Calu3 (cell line): ENCODE measurements at regions of chr3 and their contacts with region 1.

Region 1: DNA sequence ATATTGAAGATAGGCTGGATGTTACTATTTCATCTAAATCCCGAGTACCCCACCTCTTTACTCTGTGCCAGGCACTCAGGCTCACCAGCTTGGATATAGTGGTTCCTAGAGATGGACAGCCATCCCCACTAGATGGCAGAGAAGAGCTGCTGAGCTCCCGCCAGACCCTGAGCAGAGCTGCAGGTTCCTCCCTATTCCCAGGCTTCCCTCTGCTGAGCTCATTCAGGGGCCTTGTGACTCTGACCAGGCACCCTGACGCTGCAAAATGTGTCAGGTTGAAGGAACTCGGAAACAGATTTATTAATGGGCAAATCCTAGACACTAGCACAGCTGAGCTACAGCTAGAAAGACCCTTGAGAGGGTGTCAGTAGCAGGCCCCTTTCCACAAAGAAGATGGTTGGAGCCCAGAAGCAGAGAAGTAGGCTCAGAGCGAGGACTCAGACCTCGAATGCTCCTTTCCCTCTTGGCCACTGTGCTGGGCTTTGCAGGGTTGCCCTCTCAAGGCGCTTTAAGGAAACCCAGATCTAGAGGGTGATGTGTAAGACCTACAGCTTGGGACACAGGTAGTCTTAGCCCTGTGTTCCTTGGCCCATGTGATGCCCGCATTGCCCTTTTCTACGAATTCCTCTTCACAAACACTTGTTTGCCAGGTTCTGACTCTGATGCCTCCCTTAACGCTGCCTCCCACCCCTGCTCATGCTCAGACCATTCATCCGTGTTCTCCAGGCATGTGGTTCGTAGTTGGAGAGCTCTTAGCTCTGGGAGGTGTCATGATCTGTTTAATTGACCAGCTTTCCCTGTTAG is 38.0 kb upstream of the RHO start:
- DNase-seq: peak; percentile 91
- H3K4me3 Mint-ChIP-seq: no peak overlapping the region
- H3K27ac Mint-ChIP-seq: peak overlapping the region; percentile 37
- H3K4me1 Mint-ChIP-seq: peaks cover 14% of the 10 kb centered on the region
- H3K27me3 Mint-ChIP-seq: no peaks in the 10 kb centered on the region
- CTCF ChIP-seq: peak; percentile 93

Region 2: DNA sequence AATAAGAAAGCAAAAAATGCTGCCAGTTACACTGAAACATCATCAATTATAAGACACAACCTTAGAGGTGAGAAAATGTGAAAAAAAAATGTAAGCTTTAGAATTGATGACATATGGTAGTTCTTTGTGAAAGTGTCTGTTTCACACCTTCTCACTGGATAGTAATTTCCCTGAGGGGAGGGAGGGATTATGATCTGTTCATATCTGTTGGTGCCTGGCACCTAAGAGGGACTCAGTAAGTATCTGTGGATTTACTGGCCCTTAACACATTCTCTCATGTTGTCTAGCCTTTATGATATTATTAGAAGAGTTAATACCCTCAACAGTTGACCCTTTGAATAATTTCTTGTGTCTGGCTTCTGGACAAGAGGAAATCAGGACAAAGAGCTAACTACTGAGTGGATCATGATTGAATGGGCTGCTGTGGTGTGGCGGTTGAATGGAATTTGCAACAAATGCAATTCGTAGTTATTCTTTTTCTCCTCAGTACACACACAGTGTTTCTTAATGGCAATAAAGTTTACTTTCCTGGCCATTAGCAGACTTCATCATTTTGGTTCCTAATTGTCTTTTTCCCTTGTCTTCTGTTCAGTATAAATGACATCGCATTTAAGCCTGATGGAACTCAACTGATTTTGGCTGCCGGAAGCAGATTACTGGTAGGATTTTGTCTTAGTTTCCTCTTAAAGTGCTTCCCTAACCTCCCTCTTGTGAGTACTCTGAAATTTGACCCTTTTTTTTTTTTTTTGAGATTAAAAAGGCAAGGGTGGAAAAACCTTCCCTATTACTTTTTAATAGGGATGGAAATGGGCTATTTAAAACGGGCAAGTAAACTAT is 40.9 kb before region 1 on chr3:
- CTCF ChIA-PET with region 1: no interaction called
- intact Hi-C with region 1: no loop called
- DNase-seq: no peak
- H3K4me3 Mint-ChIP-seq: no peak overlapping the region
- H3K27ac Mint-ChIP-seq: no peak overlapping the region
- H3K4me1 Mint-ChIP-seq: no peaks in the 10 kb centered on the region
- H3K27me3 Mint-ChIP-seq: no peaks in the 10 kb centered on the region
- CTCF ChIP-seq: no peak

Region 3: DNA sequence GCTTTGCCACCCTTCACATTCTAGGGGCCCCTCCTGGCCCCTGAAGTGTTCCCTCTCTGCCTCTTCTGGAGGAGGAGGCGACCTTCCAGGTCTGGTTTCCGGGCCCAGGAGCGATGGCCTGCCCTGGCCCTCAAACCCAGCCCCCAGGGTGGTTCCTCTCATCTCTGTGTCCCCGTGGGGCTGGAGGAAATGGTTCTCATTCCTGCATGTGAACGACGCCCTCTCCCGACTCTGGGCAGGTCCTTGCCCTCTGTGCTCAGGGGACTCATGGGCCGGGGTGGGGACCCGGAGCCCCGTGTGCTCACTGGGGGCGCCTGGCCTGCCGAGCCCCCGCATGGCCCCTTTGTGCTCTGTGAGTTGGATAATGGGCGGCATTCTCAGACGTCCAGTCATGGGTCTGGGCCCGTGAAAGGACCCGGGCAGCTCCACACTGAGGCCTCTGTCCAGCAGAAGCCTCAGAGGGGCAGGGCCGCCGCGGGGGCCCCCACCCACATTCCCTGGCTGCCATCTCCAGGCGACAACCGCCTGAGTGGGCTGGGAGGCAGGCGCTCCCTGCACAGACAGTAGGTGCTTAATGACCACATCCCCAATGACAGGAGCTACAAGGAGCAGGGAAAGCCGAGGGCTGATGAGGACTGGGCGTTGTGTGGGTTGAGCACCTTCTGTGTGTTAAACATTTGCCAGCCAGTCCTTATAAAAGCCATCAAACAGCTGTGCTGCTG is 121.5 kb after region 1 on chr3:
- CTCF ChIA-PET with region 1: interaction called, 8 read pairs
- intact Hi-C with region 1: loop called (anchors 5 kb)
- DNase-seq: peak; percentile 62
- H3K4me3 Mint-ChIP-seq: no peak overlapping the region
- H3K27ac Mint-ChIP-seq: no peak overlapping the region
- H3K4me1 Mint-ChIP-seq: peaks cover 50% of the 10 kb centered on the region
- H3K27me3 Mint-ChIP-seq: peaks cover 25% of the 10 kb centered on the region
- CTCF ChIP-seq: no peak

Region 4: GRCh38 chr3:129650256-129650872 is 159.9 kb after region 1 on chr3:
- CTCF ChIA-PET with region 1: interaction called, 10 read pairs
- intact Hi-C with region 1: no loop called
- DNase-seq: peak; percentile 84
- H3K4me3 Mint-ChIP-seq: no peak overlapping the region
- H3K27ac Mint-ChIP-seq: peak overlapping the region; percentile 63
- H3K4me1 Mint-ChIP-seq: peaks cover 42% of the 10 kb centered on the region
- H3K27me3 Mint-ChIP-seq: no peaks in the 10 kb centered on the region
- CTCF ChIP-seq: peak; percentile 83

Region 5: DNA sequence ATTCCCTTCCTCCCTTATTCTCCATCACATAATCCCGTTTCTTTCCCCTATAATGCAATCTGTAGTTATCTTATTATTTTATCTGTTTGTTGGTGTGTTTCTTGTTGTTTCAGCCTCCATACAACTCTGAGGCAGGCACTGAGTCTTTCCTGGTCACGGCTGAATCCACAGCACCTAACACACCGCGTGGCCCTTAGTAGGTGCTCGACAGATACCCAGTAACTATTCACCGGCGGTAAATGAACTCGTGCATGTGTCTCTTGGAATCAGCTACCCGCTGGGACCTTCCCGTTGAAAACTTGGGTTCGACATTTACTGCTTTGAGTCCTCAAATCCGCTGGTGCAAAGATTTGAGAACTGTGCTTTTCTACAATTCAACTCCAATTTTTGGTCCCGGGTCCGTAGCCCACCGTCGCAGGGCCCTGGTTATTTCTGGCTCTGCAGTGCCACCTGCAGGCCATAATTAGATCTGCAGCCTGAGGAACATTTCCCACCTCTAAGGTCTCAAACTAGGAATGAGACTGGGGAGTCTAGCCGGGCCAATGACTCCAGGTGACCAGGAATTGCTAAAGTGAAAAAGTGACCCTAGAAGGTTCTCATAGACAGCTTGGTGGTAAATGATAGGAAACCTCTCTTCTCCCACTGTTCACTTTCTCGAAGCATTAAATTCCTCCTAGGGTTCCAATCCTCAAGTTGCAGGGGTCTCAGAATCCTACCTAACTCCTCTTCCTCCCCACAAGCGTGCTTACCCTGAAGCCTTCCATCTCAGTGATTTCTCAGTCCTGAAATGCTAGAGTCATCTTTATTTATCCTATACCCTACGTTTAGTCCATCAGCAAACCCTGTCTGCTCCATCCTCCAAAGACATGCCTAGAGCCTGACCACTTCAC is 444.0 kb after region 1 on chr3:
- CTCF ChIA-PET with region 1: interaction called, 20 read pairs
- intact Hi-C with region 1: loop called (anchors 1 kb)
- DNase-seq: peak; percentile 49
- H3K4me3 Mint-ChIP-seq: peak overlapping the region; percentile 47
- H3K27ac Mint-ChIP-seq: no peak overlapping the region
- H3K4me1 Mint-ChIP-seq: peaks cover 16% of the 10 kb centered on the region
- H3K27me3 Mint-ChIP-seq: no peaks in the 10 kb centered on the region
- CTCF ChIP-seq: peak; percentile 98

Region 6: GRCh38 chr3:130093741-130094391 is 603.4 kb after region 1 on chr3:
- CTCF ChIA-PET with region 1: interaction called, 7 read pairs
- intact Hi-C with region 1: loop called (anchors 10 kb)
- DNase-seq: peak; percentile 35
- H3K4me3 Mint-ChIP-seq: peak overlapping the region; percentile 57
- H3K27ac Mint-ChIP-seq: peak overlapping the region; percentile 38
- H3K4me1 Mint-ChIP-seq: peaks cover 22% of the 10 kb centered on the region
- H3K27me3 Mint-ChIP-seq: no peaks in the 10 kb centered on the region
- CTCF ChIP-seq: no peak